Activated CD4-positive, alpha-beta T cell treated with anti-CD3 and anti-CD28 coated beads for 36 hours (primary cell): ENCODE measurements at regions of chr22 and their contacts with region 1.

Region 1: DNA sequence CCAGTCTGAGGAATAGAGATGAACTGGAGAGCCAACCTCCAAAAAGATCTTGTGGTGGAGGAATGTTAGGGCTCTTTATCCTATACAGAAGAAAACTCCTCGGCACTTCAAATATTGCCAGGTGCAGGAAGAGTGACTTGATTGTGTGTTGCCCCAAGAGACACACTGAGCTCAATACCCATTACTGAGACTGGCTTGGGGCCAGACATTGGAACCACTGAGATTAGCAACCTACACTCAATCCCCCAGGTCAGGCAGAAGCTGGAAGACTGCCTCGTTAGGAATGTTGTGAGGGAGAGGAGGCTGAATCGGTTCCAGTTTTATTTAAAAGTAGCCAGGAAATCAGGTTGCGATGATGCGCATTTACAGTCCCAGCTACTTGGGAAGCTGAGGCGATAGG is 2.4 kb upstream of the SGSM3 start:
- DNase-seq: no peak
- ATAC-seq: no peak
- H3K4me3 Mint-ChIP-seq: no peak overlapping the region
- H3K27ac Mint-ChIP-seq: no peak overlapping the region
- H3K4me1 Mint-ChIP-seq: peaks cover 19% of the 10 kb centered on the region
- H3K27me3 Mint-ChIP-seq: no peaks in the 10 kb centered on the region

Region 2: GRCh38 chr22:40044102-40044869 is 323.7 kb before region 1 on chr22:
- CTCF ChIA-PET with region 1: no interaction called
- POLR2A ChIA-PET with region 1: no interaction called
- intact Hi-C with region 1: loop called in 1 of 2 experiments (anchors 1 kb)
- DNase-seq: peak; percentile 98
- ATAC-seq: peak; percentile 91
- H3K4me3 Mint-ChIP-seq: peak overlapping the region; percentile 87
- H3K27ac Mint-ChIP-seq: peak overlapping the region; percentile 99
- H3K4me1 Mint-ChIP-seq: peaks cover 24% of the 10 kb centered on the region
- H3K27me3 Mint-ChIP-seq: peaks cover 2% of the 10 kb centered on the region

Region 3: DNA sequence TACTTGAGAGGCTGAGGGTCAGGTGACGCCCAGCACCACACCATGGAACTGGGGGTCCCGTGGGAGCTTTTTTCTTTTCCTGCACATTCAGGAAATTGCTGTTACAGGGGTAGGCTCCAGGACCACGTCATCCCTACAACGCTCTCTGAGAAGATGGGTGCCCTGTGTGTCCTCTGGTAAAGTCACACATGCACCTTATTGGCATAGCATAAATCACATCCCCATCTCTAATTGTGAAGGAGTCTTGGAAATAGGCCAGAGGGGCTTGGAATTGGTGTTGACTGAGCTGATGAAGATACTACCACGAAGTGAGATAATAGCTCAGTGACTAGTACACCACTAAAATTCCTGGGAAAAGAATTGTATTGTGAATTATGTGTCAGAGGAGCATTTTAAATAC is 132.7 kb before region 1 on chr22:
- CTCF ChIA-PET with region 1: no interaction called
- POLR2A ChIA-PET with region 1: no interaction called
- intact Hi-C with region 1: no loop called
- DNase-seq: no peak
- ATAC-seq: no peak
- H3K4me3 Mint-ChIP-seq: no peak overlapping the region
- H3K27ac Mint-ChIP-seq: no peak overlapping the region
- H3K4me1 Mint-ChIP-seq: peaks cover 54% of the 10 kb centered on the region
- H3K27me3 Mint-ChIP-seq: no peaks in the 10 kb centered on the region

Region 4: DNA sequence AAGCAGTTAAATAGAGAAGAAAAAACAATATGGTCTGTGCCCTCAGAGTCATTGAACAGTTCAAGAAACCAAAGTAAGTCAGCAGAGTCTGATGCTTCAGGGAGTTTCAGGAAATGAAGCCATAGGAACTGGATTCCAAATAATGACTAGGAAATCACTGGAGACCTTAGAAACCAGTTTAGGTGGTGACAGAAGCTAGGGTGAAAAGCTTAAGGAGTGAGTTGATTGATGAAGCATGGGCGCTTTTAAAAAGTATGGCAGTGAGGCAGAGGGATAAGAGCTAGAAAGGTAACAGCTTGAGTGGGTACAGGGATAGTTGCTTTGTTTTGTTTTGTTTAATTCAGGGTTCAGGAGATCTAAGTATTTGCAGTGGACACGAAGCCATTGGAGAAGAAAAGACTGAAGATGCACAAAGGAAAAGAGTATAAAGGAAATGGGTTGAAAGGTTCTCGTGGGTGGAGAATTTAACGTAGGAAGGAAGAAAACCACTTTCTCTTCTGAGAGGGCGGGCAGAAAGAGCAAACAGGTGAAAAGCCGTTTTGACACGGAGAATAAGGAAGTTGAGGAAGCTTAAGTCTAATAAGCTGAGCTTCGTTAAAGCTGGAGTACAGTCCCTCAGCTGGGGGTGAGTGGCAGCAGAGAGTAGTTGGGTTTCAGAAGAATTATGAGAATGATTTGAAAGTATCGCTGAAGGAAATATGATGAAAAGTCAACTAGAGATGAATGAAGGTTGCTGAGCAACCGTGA is 17.2 kb after region 1 on chr22:
- CTCF ChIA-PET with region 1: interaction called, 6 read pairs
- POLR2A ChIA-PET with region 1: no interaction called
- intact Hi-C with region 1: loop called in 1 of 2 experiments (anchors 2 kb)
- DNase-seq: peak; percentile 62
- ATAC-seq: peak; percentile 86
- H3K4me3 Mint-ChIP-seq: peak overlapping the region; percentile 68
- H3K27ac Mint-ChIP-seq: peak overlapping the region; percentile 89
- H3K4me1 Mint-ChIP-seq: peaks cover 58% of the 10 kb centered on the region
- H3K27me3 Mint-ChIP-seq: no peaks in the 10 kb centered on the region

Region 5: DNA sequence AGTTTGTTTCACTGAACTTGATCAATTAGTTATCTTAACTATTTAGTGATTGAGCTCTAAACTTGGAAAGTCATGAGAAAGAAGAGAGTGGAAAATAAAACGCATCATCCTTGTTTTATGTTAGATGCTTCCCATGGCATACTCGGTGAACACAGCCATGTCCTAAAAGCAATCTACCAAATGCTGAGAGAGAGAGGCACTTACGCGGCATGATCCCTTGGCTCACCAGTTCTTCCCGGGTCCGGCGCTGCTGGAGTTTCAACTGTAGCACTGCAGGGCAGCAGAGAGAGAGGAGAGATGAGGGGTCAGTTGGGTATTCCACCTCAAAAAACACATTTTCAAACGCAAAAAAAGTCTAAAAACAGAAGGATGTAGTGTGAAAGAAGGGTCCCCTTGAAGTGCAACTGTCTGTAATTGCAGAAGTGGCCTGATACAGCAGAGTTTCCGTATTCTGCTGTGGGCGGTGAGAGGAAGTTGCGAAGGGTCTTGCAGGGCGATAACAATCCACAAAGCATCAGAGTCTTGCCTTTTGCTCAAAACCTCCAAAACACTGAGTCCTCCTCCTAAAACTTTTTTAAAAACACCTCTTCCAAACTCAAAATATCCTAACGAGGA is 95.1 kb after region 1 on chr22:
- CTCF ChIA-PET with region 1: no interaction called
- POLR2A ChIA-PET with region 1: no interaction called
- intact Hi-C with region 1: no loop called
- DNase-seq: peak; percentile 74
- ATAC-seq: peak; percentile 84
- H3K4me3 Mint-ChIP-seq: peak overlapping the region; percentile 87
- H3K27ac Mint-ChIP-seq: peak overlapping the region; percentile 91
- H3K4me1 Mint-ChIP-seq: peaks cover 65% of the 10 kb centered on the region
- H3K27me3 Mint-ChIP-seq: no peaks in the 10 kb centered on the region